A549 (cell line): ENCODE measurements at regions of chr16 and their contacts with region 1.

Region 1: GRCh38 chr16:84617791-84618580 is at the start of gene COTL1:
- DNase-seq: peak; percentile 88 to 98
- ATAC-seq: peak; percentile 63 to 69
- H3K4me3 ChIP-seq: peak within 1 kb of the TSS; percentile 92
- H3K27ac ChIP-seq: peak within 1 kb of the TSS; percentile 82 to 98
- H3K4me1 ChIP-seq: peaks cover 49% of the 10 kb centered on the region
- CTCF ChIP-seq: no peak
- EP300 ChIP-seq: no peak
- POLR2A ChIP-seq: peak; percentile 99
- RAD21 ChIP-seq: no peak
- polyA plus RNA-seq, gene COTL1: 89.7 and 94.1 TPM in 2 replicates

Region 2: DNA sequence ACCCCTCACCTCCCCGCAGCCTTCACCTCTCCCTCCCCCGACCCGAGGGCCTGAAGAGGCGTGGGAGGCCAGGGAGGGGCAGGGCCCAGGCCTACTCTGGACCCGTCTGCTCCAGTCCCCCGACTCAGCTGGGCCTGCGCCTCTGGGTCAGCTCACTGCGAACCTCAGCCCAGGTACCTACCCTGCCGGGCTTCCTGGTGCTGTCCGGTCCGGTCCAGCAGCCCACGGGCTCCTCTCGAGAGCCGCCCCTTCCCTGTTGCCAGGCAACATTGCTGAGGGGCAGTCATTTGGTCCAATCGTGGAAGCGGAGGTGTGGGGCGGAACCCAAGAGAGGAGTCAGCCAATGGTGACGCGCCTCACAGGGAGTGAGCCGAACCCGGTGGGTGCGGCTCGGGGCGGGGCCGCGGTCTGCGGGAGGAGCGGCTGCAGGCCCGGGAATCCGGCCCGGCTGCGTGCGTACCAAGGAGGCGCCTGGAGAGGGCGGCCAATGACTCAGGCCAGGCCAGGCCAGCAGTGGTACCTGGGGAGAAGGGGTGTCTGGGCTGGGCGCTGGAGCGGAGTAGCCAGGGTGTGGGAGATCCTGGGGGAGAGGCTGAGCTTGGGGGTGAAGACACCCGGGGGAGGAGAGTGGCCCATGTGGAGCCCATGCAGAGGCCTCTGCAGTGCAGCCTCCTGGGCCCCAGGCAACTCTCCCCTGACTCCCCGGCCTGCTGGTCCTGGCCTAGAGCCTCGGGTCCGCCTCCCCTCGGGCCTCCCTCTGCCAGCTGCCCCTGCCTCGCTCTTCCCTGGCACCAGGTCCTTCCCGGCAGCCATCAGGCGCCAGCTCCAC is 113.4 kb before region 1 on chr16 and contains the start of gene MEAK7:
- CTCF ChIA-PET with region 1: interaction called, 284 read pairs
- POLR2A ChIA-PET with region 1: interaction called, 19 read pairs
- DNase-seq: peak; percentile 98
- ATAC-seq: peak; percentile 89 to 94
- H3K4me3 ChIP-seq: peak within 1 kb of the TSS; percentile 74
- H3K27ac ChIP-seq: peak within 1 kb of the TSS; percentile 95 to 96
- H3K4me1 ChIP-seq: peaks cover 58% of the 10 kb centered on the region
- CTCF ChIP-seq: no peak
- EP300 ChIP-seq: no peak
- POLR2A ChIP-seq: peak; percentile 81
- RAD21 ChIP-seq: no peak
- polyA plus RNA-seq, gene MEAK7: 26.2 and 31.3 TPM in 2 replicates

Region 3: DNA sequence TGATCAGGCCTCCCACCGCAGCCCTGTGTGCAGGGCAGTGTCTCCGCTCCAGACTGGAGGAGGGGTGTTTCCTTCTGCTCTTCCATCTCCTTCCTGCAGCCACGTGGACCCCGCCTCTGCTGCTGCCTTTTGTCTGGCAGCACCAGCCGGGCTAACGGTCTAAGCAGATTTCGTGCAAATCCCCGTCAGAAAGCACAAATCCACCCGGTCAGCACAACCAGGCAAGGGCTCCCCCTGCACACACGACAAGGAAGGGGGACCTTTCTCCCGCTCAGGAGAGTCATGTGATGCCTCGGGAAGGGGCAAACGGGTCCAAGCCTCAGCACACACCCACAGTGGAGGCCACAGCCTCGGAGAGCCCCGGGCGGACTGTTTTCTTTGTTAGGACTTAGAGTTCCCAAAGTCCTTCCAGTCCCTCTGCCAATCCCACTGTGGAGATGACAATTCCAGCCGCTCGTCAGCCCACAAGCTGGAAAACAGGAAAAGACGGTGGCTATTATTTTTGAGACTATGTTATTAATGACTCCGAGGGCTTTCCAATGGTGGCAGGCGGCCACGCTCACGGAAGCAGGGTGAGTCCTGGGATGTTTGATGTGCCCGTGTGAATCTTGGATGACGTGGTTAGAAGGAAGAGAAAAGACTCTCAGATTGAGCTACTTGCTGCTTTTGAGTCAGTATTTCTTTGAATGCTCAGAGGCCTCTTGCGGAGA is 91.0 kb before region 1 on chr16:
- CTCF ChIA-PET with region 1: interaction called, 284 read pairs
- POLR2A ChIA-PET with region 1: no interaction called
- DNase-seq: no peak
- ATAC-seq: no peak
- H3K4me3 ChIP-seq: no peak overlapping the region
- H3K27ac ChIP-seq: 0 out of 6 replicates have a peak overlapping the region, but pooled peaks of 1 of the 2 experiments have one; percentile 12
- H3K4me1 ChIP-seq: peaks cover 7% of the 10 kb centered on the region
- CTCF ChIP-seq: no peak
- EP300 ChIP-seq: no peak
- POLR2A ChIP-seq: no peak
- RAD21 ChIP-seq: no peak

Region 4: GRCh38 chr16:84585886-84586285 is 32.1 kb before region 1 on chr16:
- CTCF ChIA-PET with region 1: interaction called, 15 read pairs
- POLR2A ChIA-PET with region 1: no interaction called
- DNase-seq: peak; percentile 40 to 48
- ATAC-seq: peak; percentile 42 to 79; a peak in 4 of 6 replicates
- H3K4me3 ChIP-seq: no peak overlapping the region
- H3K27ac ChIP-seq: no peak overlapping the region
- H3K4me1 ChIP-seq: peaks cover 12% of the 10 kb centered on the region
- CTCF ChIP-seq: no peak
- EP300 ChIP-seq: no peak
- POLR2A ChIP-seq: no peak
- RAD21 ChIP-seq: no peak

Region 5: DNA sequence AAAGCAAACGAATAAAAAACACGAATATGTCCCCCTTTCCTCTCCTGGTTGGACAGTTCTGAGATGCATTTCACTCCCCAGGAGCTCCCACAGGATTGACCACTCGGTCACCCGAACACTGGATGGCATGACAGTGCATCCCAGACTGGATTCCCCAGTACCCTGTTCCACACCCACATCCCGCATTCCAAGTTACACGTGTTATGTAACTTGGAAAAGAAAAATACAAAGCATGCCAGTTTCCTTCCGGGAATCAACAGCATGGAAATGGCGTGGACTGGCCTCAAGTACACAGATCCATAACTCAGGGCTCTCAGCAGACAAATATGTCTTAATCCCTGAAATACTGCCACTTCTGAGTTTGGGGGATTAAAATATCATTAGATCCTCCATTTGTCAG is 17.7 kb after region 1 on chr16:
- CTCF ChIA-PET with region 1: interaction called, 17 read pairs
- POLR2A ChIA-PET with region 1: no interaction called
- DNase-seq: no peak
- ATAC-seq: no peak
- H3K4me3 ChIP-seq: no peak overlapping the region
- H3K27ac ChIP-seq: no peak overlapping the region
- H3K4me1 ChIP-seq: no peaks in the 10 kb centered on the region
- CTCF ChIP-seq: no peak
- EP300 ChIP-seq: no peak
- POLR2A ChIP-seq: no peak
- RAD21 ChIP-seq: no peak

Region 6: DNA sequence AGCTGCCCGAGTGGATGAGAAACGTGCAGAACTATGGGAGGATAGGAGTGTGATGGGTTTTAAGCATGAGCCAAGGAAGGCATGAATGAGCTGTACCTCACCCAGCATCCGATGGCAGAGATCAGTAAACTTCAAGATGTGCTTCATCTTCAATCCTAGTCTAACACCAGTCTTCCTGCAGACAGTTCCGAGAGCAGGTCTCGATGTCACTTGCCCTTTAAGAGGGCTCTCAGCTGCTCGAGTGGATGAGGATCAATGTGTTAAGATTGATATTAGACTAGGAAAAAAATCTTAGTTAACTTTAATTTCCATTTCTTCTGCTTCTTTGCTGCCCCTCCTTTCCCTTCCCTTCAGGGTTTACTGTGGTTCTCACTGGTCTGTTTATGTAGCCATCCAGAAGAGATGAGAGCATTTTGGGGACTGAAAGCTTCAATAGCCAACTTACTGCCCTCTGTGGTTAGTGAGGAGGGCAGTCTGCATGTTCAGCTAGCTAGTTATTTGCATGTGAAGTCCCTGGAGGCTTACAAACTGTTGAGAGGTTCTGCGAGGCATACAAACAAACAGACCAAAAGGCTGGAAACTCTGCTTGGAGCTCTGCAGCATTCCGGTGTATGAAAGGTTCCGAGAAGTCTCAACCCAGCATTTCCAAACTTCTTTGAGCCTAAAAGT is 45.6 kb after region 1 on chr16:
- CTCF ChIA-PET with region 1: interaction called, 11 read pairs
- POLR2A ChIA-PET with region 1: no interaction called
- DNase-seq: no peak
- ATAC-seq: no peak
- H3K4me3 ChIP-seq: no peak overlapping the region
- H3K27ac ChIP-seq: no peak overlapping the region
- H3K4me1 ChIP-seq: no peaks in the 10 kb centered on the region
- CTCF ChIP-seq: no peak
- EP300 ChIP-seq: no peak
- POLR2A ChIP-seq: no peak
- RAD21 ChIP-seq: no peak

Region 7: GRCh38 chr16:84933774-84934631 is 316.0 kb after region 1 on chr16:
- CTCF ChIA-PET with region 1: no interaction called
- POLR2A ChIA-PET with region 1: no interaction called
- DNase-seq: no peak
- ATAC-seq: no peak
- H3K4me3 ChIP-seq: no peak overlapping the region
- H3K27ac ChIP-seq: no peak overlapping the region
- H3K4me1 ChIP-seq: peaks cover 1% of the 10 kb centered on the region; the same call in 1 of the 3 replicates
- CTCF ChIP-seq: no peak
- EP300 ChIP-seq: no peak
- POLR2A ChIP-seq: no peak
- RAD21 ChIP-seq: no peak